Activated naive CD4-positive, alpha-beta T cell treated with anti-CD3 and anti-CD28 coated beads for 36 hours (primary cell): ENCODE measurements at regions of chr15 and their contacts with region 1.

Region 1: GRCh38 chr15:25933456-25934158 is 70.5 kb upstream of the ATP10A start:
- DNase-seq: peak; percentile 85
- H3K4me3 Mint-ChIP-seq: peak overlapping the region; percentile 82
- H3K27ac Mint-ChIP-seq: peak overlapping the region; percentile 60
- H3K4me1 Mint-ChIP-seq: peaks cover 6% of the 10 kb centered on the region
- H3K27me3 Mint-ChIP-seq: peaks cover 2% of the 10 kb centered on the region

Region 2: GRCh38 chr15:25508369-25509002 is 425.1 kb before region 1 on chr15:
- CTCF ChIA-PET with region 1: interaction called, 13 read pairs
- intact Hi-C with region 1: loop called (anchors 1 kb)
- DNase-seq: peak; percentile 6
- H3K4me3 Mint-ChIP-seq: no peak overlapping the region
- H3K27ac Mint-ChIP-seq: no peak overlapping the region
- H3K4me1 Mint-ChIP-seq: no peaks in the 10 kb centered on the region
- H3K27me3 Mint-ChIP-seq: peaks cover 2% of the 10 kb centered on the region

Region 3: DNA sequence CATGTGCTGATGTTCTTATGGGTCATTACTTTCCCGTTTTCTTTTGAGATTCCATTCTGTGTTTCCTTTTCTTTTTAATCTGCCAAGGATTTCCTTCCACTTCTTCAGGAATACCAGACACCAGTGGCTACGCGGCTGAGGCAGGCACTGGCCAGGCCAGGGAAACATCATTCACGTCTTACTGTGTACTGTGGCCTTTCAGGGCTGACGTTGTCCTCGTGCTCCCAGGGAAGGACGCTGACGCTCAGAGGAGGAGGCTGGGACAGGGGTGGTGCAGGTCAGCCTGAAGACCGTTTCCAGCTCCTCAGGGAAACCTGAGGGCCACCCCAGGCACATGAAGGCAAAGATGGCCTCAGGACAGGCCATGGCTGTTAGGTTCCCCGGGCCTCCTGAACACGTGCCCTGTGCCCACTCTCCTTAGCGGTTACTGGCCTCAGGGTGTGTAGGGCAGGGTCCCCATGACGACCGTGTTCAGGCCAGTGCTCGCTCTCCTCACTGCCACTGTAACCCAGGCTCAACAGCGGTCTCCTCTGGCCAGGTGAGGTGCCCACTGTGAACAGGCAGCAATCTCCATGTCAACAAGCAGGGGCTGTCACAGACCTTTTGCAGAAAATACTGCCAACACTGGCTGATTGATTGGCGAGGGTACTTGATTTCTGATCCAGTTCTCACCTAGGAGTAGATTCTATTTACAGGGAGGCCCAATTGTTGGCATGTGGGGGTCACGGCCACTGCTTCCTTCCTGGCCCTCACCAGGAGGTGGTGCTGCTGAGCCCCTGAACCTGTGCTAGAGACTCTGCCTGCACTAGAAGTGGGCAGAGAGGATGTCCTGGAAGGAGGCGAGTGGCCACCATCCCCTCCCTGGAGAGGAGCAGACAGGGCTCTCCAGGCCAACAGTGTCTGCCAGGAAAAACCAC is 240.0 kb before region 1 on chr15:
- CTCF ChIA-PET with region 1: interaction called, 23 read pairs
- intact Hi-C with region 1: loop called (anchors 1 kb)
- DNase-seq: peak; percentile 59
- H3K4me3 Mint-ChIP-seq: no peak overlapping the region
- H3K27ac Mint-ChIP-seq: no peak overlapping the region
- H3K4me1 Mint-ChIP-seq: no peaks in the 10 kb centered on the region
- H3K27me3 Mint-ChIP-seq: no peaks in the 10 kb centered on the region

Region 4: DNA sequence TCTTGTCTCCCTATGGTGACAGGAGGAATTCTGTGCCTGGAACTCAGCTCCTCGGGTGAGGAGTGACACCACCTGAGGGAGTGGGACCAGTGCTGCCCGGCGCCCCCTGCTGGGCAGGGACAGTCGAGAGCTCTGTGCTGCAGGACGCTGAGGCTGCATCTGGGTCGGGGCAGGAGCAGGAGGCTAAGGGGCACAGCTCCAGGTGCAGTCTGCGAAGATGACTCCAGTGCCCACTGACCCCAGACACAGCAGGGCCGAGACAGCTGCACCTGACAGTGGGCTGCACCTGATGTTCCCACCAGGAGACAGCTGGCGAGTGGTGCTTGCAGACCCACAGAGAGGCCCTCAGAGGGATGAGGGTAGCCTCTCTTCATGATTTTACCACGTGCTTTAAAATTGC is 223.4 kb before region 1 on chr15:
- CTCF ChIA-PET with region 1: interaction called, 18 read pairs
- intact Hi-C with region 1: no loop called
- DNase-seq: peak; percentile 62
- H3K4me3 Mint-ChIP-seq: no peak overlapping the region
- H3K27ac Mint-ChIP-seq: no peak overlapping the region
- H3K4me1 Mint-ChIP-seq: no peaks in the 10 kb centered on the region
- H3K27me3 Mint-ChIP-seq: no peaks in the 10 kb centered on the region

Region 5: DNA sequence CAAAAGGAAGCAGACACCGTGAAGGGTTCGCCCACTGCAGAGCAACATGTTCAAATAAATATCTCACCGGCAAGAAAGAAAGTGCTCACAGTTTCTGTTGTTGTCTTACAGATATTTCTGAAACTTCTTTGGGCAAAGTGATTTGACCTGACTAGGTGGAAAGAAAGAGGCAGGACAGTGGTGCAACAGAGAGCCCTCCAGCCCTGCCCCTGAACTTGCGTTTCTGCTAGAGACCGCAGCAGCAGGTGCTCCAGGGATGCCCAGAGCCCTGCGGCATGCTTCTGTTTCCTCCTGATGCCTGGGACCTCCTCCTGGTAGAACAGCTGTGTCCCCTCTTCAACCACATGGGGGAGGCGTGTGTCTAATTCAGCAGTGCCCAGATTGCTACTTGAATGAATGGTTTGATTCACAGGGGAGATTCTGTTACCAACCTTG is 193.9 kb before region 1 on chr15:
- CTCF ChIA-PET with region 1: interaction called, 10 read pairs
- intact Hi-C with region 1: loop called (anchors 1 kb)
- DNase-seq: peak; percentile 66
- H3K4me3 Mint-ChIP-seq: no peak overlapping the region
- H3K27ac Mint-ChIP-seq: no peak overlapping the region
- H3K4me1 Mint-ChIP-seq: peaks cover 19% of the 10 kb centered on the region
- H3K27me3 Mint-ChIP-seq: no peaks in the 10 kb centered on the region

Region 6: DNA sequence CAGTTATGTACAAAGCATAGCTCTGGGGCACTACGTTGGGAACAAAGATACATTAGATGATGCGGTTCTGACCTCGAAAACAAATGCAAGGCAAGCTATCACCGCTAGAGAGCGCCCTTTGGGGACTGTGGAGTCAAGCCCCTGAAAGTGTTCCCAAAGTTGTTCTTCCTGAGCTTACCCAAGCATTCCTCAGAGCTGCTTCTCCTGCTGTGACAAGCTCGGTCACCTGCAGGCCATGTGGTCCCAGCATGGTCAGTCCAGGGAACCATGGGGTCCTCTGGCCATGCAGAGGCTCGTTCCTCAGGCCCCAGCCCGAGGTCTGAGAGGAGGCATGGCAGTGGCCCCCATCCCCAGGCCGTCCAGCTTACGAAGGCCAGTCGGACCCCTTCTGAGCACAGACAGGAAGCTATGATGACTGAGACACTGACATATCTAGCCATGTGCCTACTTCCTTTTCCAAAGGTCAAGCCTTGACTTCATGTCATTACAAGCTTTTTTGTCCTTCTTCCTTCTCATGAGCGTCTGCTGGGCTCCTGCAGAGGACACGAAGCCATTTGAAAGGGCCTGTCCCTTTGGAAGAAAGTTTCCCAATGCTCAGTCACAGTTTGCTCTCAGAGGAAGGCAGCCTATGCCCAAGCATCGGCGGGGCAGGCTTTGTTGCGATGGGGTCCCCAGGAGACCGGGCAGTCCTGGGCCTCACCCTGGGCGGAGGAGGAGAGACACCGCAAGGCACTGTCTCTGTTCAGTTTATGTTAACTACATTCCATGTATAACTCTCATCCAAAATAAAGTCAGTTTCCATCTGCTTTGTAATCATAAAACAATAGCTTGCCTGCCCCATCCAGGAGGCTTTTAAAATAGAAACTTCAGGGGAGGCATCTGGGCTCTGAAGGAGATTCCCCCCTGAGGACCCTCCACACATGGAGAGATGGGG is 149.7 kb before region 1 on chr15:
- CTCF ChIA-PET with region 1: interaction called, 11 read pairs
- intact Hi-C with region 1: loop called (anchors 1 kb)
- DNase-seq: peak; percentile 68
- H3K4me3 Mint-ChIP-seq: no peak overlapping the region
- H3K27ac Mint-ChIP-seq: no peak overlapping the region
- H3K4me1 Mint-ChIP-seq: peaks cover 42% of the 10 kb centered on the region
- H3K27me3 Mint-ChIP-seq: no peaks in the 10 kb centered on the region

Region 7: DNA sequence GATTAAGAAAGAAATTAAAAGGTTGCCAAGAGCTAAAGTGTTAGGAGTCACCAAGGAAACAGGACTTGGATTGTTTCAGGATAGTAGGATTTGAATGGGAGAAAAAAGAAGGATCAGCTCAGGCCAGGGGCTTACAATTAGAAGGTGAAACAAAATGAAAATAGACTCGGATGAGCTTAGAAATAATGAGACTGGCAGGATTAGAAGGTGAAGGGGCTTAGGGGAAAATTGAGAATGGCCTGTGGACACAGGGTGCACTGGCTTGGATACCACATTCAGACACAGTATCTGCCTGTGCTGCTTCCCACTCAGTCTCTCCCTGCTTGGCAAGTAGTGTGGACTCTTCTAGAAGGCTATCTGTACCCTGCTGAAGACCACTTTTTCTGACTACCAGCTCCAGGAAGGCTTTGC is 135.6 kb after region 1 on chr15:
- CTCF ChIA-PET with region 1: no interaction called
- intact Hi-C with region 1: no loop called
- DNase-seq: no peak
- H3K4me3 Mint-ChIP-seq: no peak overlapping the region
- H3K27ac Mint-ChIP-seq: no peak overlapping the region
- H3K4me1 Mint-ChIP-seq: peaks cover 15% of the 10 kb centered on the region
- H3K27me3 Mint-ChIP-seq: peaks cover 14% of the 10 kb centered on the region

Region 8: GRCh38 chr15:26082221-26083109 is 148.9 kb after region 1 on chr15:
- CTCF ChIA-PET with region 1: interaction called, 4 read pairs
- intact Hi-C with region 1: loop called (anchors 5 kb)
- DNase-seq: peak; percentile 96
- H3K4me3 Mint-ChIP-seq: peak overlapping the region; percentile 83
- H3K27ac Mint-ChIP-seq: peak overlapping the region; percentile 92
- H3K4me1 Mint-ChIP-seq: peaks cover 29% of the 10 kb centered on the region
- H3K27me3 Mint-ChIP-seq: peaks cover 2% of the 10 kb centered on the region